T-cell (primary cell): ENCODE measurements at regions of chr1 and their contacts with region 1.

Region 1: GRCh38 chr1:109640285-109640865 is 15.5 kb upstream of the GSTM4 start:
- DNase-seq: peak; percentile 58 to 95 (median 85)
- ATAC-seq: peak; percentile 70 to 87 (median 74)
- H3K4me3 ChIP-seq: no peak overlapping the region
- H3K4me3 Mint-ChIP-seq: no peak overlapping the region
- H3K27ac ChIP-seq: no peak overlapping the region
- H3K27ac Mint-ChIP-seq: peak overlapping the region in 1 of 2 donors; percentile 57
- H3K4me1 ChIP-seq: peaks cover 0 to 20% of the 10 kb centered on the region in 2 experiments
- H3K4me1 Mint-ChIP-seq: peaks cover 6 to 17% (median 14%) of the 10 kb centered on the region in 3 donors
- H3K27me3 ChIP-seq: peaks cover 0 to 23% of the 10 kb centered on the region in 2 experiments
- H3K27me3 Mint-ChIP-seq: no peaks in the 10 kb centered on the region

Region 2: GRCh38 chr1:109620841-109621286 is 19.5 kb before region 1 on chr1:
- CTCF ChIA-PET with region 1: interaction called, 7 to 10 read pairs
- POLR2A ChIA-PET with region 1: no interaction called
- DNase-seq: peak; percentile 87 to 100 (median 97)
- ATAC-seq: peak; percentile 87 to 92 (median 90)
- H3K4me3 ChIP-seq: peak overlapping the region; percentile 88 to 98
- H3K4me3 Mint-ChIP-seq: peak overlapping the region; percentile 93 to 97 (median 96)
- H3K27ac ChIP-seq: peak overlapping the region; percentile 96
- H3K27ac Mint-ChIP-seq: peak overlapping the region; percentile 95 to 96
- H3K4me1 ChIP-seq: peaks cover 32 to 69% of the 10 kb centered on the region in 2 experiments
- H3K4me1 Mint-ChIP-seq: peaks cover 71 to 89% (median 77%) of the 10 kb centered on the region in 3 donors
- H3K27me3 ChIP-seq: no peaks in the 10 kb centered on the region
- H3K27me3 Mint-ChIP-seq: no peaks in the 10 kb centered on the region

Region 3: GRCh38 chr1:109677459-109677858 is 37.1 kb after region 1 on chr1:
- CTCF ChIA-PET with region 1: no interaction called
- POLR2A ChIA-PET with region 1: no interaction called
- DNase-seq: no peak
- ATAC-seq: no peak
- H3K4me3 ChIP-seq: no peak overlapping the region
- H3K4me3 Mint-ChIP-seq: no peak overlapping the region
- H3K27ac ChIP-seq: no peak overlapping the region
- H3K27ac Mint-ChIP-seq: no peak overlapping the region
- H3K4me1 ChIP-seq: no peaks in the 10 kb centered on the region
- H3K4me1 Mint-ChIP-seq: no peaks in the 10 kb centered on the region
- H3K27me3 ChIP-seq: no peaks in the 10 kb centered on the region
- H3K27me3 Mint-ChIP-seq: no peaks in the 10 kb centered on the region

Region 4: DNA sequence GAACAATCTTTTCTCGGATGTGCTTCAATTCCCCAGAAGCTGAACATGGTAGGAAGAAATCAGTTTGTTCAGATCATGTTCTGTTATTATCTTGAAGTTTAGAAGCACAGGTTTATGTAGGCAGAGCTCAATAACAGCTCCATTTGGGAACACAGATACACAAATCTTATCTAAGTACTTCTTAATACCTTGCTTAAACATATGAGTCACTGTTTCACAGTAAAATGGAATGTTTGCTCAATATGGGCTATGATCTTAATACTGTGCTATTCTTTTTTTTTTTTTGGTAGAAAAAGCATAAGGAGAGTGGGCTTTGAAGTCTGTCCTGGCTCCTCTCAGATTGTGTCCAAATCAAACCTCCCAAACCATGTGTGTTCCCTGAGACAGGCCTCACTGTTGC is 824.0 kb after region 1 on chr1:
- CTCF ChIA-PET with region 1: no interaction called
- POLR2A ChIA-PET with region 1: no interaction called
- DNase-seq: no peak
- ATAC-seq: no peak
- H3K4me3 ChIP-seq: no peak overlapping the region
- H3K4me3 Mint-ChIP-seq: no peak overlapping the region
- H3K27ac ChIP-seq: no peak overlapping the region
- H3K27ac Mint-ChIP-seq: no peak overlapping the region
- H3K4me1 ChIP-seq: no peaks in the 10 kb centered on the region
- H3K4me1 Mint-ChIP-seq: no peaks in the 10 kb centered on the region
- H3K27me3 ChIP-seq: peaks cover 0 to 11% of the 10 kb centered on the region in 2 experiments
- H3K27me3 Mint-ChIP-seq: peaks cover 3 to 4% of the 10 kb centered on the region in 2 donors